HEK293 (cell line): ENCODE measurements at regions of chr7 and their contacts with region 1.

Region 1: GRCh38 chr7:130758429-130759056 is 24.5 kb upstream of the KLF14 start:
- H3K4me3 ChIP-seq: no peak overlapping the region
- H3K27ac ChIP-seq: no peak overlapping the region
- H3K4me1 ChIP-seq: no peaks in the 10 kb centered on the region
- CTCF ChIP-seq: peak; percentile 33; the same call in 1 of the 2 replicates

Region 2: DNA sequence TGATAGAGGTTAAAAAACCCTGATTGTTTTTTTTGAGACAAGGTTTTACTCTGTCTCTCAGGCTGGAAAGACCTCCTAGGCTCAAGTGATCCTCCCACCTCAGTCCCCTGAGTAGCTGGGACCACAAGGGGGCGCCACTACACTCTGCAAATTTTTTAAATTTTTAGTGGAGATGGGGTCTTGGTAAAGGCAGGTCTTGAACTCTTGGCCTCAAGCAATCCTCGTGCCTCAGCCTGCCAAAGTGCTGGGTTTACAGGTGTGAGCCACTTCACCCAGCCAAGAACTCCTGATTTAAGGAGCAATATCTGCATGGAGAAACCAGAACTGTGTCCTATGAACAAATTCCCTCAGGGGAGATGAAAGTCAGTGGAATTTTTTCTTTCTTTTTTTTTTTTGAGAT is 695.5 kb before region 1 on chr7:
- CTCF ChIA-PET with region 1: interaction called, 13 read pairs
- POLR2A ChIA-PET with region 1: no interaction called
- H3K4me3 ChIP-seq: no peak overlapping the region
- H3K27ac ChIP-seq: no peak overlapping the region
- H3K4me1 ChIP-seq: no peaks in the 10 kb centered on the region
- CTCF ChIP-seq: no peak

Region 3: DNA sequence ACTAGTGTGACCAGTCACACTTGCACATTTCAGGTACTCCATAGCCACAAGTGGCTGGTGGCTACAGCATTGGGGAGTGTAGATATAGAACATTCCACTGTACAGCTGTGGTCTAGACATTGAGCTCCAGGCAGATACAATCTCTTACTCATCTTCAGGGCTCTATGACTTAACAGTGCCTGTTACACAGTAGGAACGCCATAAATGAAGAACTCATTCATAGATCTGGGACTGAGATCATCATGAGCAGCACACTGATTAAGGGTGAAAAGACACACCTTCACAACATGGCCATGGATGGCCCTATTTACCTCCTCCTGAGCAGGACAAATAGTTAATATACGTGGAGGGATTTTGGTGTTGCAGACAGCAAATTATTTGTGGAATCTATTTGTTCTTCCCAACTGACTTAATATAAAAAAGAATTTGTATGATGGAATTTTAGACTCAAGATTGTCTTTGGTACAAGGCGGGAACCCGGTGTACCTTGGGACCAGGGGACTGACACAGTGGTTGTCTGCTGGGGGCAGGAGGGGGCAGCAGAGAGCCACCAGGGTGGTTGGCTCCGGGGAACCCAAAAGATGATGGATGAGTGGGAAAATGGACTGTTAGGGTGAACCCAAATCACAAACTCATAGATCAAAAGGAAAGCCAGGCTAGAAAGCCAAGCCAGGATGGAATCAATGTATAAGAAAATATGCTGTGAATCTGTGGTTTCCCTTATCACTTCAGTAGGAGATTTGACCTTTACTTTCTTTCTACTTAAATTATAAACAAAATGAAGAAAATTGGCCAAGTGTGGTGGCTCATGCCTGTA is 516.1 kb before region 1 on chr7:
- CTCF ChIA-PET with region 1: interaction called, 11 read pairs
- POLR2A ChIA-PET with region 1: no interaction called
- H3K4me3 ChIP-seq: no peak overlapping the region
- H3K27ac ChIP-seq: no peak overlapping the region
- H3K4me1 ChIP-seq: no peaks in the 10 kb centered on the region
- CTCF ChIP-seq: peak; percentile 81

Region 4: GRCh38 chr7:130721486-130722280 is 36.9 kb before region 1 on chr7:
- CTCF ChIA-PET with region 1: interaction called, 10 read pairs
- POLR2A ChIA-PET with region 1: no interaction called
- H3K4me3 ChIP-seq: no peak overlapping the region
- H3K27ac ChIP-seq: no peak overlapping the region
- H3K4me1 ChIP-seq: no peaks in the 10 kb centered on the region
- CTCF ChIP-seq: peak; percentile 53